MCF 10A (cell line): ENCODE measurements at regions of chr12 and their contacts with region 1.

Region 1: DNA sequence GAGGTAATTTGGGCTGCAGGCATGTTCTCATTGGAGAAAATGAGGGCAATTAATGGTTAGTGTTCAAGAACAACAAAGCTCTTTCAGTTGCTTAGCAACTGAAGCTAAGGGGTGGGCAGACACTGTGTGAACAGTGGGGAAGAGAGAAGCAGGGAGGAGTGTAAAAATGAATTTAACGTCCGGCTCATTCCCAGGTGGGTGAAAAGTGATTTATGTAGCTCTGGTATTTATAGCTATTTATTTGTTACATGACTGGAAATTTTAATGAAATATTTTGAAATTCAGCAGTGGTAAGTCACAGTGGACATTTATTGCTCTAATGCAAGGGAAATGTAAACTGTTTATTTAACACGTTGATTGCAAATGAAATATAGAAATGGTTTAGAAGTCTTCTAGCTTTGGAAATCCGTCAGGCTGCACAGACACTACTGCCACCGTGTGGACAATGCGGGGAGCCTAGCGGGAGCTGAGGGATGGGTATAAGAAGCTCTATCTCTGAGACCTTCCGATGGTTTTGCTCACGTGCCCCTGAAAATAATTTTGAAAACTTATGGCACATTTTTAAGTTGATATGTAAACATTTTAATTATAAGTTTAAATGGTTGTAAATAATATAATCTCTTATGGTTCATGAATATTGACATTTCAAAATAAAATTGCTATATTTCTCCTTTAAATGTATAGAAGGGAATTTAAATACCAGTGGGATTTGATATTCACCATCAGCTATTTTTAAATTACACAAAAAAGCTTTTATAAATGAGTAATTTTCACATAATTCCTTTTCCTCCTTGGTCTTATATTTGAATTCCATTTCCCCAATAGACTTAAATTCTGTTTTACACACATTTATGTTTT is 54.4 kb downstream of the E2F7 start:
- DNase-seq: peak; percentile 79
- H3K4me3 Mint-ChIP-seq: no peak overlapping the region
- H3K27ac Mint-ChIP-seq: no peak overlapping the region
- H3K4me1 Mint-ChIP-seq: peaks cover 4% of the 10 kb centered on the region
- H3K27me3 Mint-ChIP-seq: no peaks in the 10 kb centered on the region
- CTCF ChIP-seq: peak; percentile 86

Region 2: GRCh38 chr12:76621582-76622024 is 389.3 kb before region 1 on chr12:
- CTCF ChIA-PET with region 1: interaction called, 18 read pairs
- POLR2A ChIA-PET with region 1: no interaction called
- intact Hi-C with region 1: loop called (anchors 1 kb)
- DNase-seq: peak; percentile 83
- H3K4me3 Mint-ChIP-seq: no peak overlapping the region
- H3K27ac Mint-ChIP-seq: no peak overlapping the region
- H3K4me1 Mint-ChIP-seq: peaks cover 5% of the 10 kb centered on the region
- H3K27me3 Mint-ChIP-seq: no peaks in the 10 kb centered on the region
- CTCF ChIP-seq: peak; percentile 91

Region 3: DNA sequence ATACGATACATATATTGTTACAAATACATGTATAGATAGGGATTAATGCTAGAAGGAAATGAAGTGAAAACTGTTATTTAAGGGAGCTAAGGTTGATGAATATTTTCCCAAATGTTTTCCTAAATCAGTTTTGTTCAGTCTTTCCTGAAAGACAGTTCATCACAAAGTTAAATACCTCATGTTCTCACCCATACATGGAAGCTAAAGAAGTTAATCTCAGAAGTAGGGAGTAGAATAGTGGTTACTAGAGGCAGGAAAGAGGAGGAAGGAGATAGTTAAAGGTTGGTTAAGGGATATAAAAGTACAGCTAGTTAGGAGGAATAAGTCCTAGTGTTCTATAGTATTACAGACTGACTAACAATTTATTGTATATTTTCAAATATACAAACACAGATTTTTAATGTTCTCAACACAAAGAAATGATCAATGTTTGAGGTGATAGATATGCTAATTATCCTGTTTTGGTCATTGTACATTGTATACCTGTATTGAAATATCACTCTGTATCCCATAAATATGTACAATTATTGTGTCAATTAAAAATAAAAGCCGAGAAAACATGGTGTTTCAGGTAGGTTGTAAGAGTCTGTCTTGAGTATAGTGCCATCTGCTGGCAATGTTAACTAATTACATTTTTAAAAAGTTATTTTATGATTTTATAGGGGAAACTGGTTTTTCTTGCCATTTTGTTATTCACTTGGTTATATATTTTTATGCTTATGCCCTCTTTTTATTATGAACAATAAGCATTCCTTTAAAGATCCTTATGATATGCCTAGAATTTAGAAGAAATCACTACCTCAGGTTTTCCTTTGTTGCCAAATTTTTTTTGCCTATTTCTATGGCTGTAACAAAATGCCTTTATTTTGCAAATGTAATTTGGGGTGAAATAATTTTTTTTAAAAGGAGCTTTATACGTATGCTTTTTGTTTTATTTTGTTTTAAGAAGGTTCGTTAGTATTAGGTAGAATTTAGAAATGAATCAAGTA is 220.1 kb before region 1 on chr12:
- CTCF ChIA-PET with region 1: interaction called, 42 read pairs
- POLR2A ChIA-PET with region 1: no interaction called
- intact Hi-C with region 1: no loop called
- DNase-seq: peak; percentile 24
- H3K4me3 Mint-ChIP-seq: no peak overlapping the region
- H3K27ac Mint-ChIP-seq: peak overlapping the region; percentile 39
- H3K4me1 Mint-ChIP-seq: no peaks in the 10 kb centered on the region
- H3K27me3 Mint-ChIP-seq: no peaks in the 10 kb centered on the region
- CTCF ChIP-seq: peak; percentile 48

Region 4: DNA sequence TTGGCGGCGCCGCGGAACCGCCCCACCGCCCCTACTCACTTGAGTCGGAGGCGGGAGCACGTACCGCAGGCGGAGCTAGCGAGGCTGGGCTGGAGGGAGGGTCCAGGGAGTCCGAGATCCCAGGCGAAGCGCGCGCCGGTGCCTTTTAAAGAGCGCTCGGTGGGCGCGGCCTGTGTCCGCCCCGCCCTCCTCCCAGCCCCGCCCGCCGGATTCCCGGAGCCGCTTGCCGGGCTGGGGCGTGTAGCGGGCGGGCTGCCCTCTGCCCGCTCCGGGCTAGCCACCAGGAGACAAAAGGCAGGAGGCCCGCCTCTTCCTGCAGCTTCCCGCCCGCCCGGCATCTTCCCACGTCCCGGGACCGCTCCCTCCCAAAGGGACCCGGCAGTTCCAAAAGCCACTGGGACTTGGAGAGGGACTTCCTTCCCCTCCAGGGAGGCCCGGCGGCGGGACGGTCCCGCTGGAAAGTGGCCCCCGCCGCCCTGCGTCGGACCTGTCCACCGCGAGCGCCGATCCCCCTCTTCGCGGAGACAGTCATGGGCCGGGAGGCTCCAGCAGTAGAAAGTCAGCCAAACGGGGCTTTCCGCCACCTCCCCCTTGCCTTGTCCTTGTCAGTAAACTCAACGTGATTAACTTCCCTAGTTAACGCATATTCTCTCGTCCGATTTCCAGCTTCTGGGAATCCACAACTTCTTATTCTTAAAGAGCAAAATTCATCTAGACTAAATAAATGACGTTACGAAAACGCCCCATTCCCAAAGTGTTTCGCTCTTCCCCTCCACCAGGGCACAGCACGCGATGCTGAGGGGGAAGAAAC is 131.8 kb before region 1 on chr12 and contains the start of gene CSRP2:
- CTCF ChIA-PET with region 1: interaction called, 12 read pairs
- POLR2A ChIA-PET with region 1: interaction called, 3 read pairs
- intact Hi-C with region 1: loop called (anchors 2 kb)
- DNase-seq: peak; percentile 91
- H3K4me3 Mint-ChIP-seq: peak within 1 kb of the TSS; percentile 98
- H3K27ac Mint-ChIP-seq: peak within 1 kb of the TSS; percentile 49
- H3K4me1 Mint-ChIP-seq: peaks cover 15% of the 10 kb centered on the region
- H3K27me3 Mint-ChIP-seq: no peaks in the 10 kb centered on the region
- CTCF ChIP-seq: no peak
- total RNA-seq, gene CSRP2: 2.0 and 2.6 TPM in 2 replicates

Region 5: GRCh38 chr12:76952995-76953394 is 57.9 kb before region 1 on chr12:
- CTCF ChIA-PET with region 1: interaction called, 200 read pairs
- POLR2A ChIA-PET with region 1: interaction called, 4 read pairs
- intact Hi-C with region 1: loop called (anchors 1 kb)
- DNase-seq: peak; percentile 30
- H3K4me3 Mint-ChIP-seq: no peak overlapping the region
- H3K27ac Mint-ChIP-seq: no peak overlapping the region
- H3K4me1 Mint-ChIP-seq: no peaks in the 10 kb centered on the region
- H3K27me3 Mint-ChIP-seq: no peaks in the 10 kb centered on the region
- CTCF ChIP-seq: peak; percentile 16

Region 6: DNA sequence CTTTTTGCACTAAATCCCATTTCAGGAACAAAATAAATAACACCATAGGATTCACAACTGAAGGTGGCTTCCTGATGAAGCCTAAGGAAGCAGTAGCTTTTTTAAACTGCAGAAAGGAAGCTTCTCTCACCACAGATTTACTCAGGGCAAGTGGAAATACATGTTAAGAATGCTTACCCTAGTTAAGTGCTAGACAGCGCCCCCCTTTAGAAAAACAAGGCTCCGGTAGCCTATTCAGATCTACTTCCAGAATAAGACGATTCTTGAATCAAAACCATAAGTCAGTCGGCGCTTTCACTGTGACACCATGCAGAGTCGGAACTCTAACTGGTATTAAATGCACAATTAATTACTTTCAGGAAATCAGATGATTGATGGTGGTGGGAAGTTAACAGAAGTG is 12.6 kb after region 1 on chr12:
- CTCF ChIA-PET with region 1: interaction called, 43 read pairs
- POLR2A ChIA-PET with region 1: no interaction called
- intact Hi-C with region 1: no loop called
- DNase-seq: no peak
- H3K4me3 Mint-ChIP-seq: no peak overlapping the region
- H3K27ac Mint-ChIP-seq: peak overlapping the region; percentile 65
- H3K4me1 Mint-ChIP-seq: no peaks in the 10 kb centered on the region
- H3K27me3 Mint-ChIP-seq: no peaks in the 10 kb centered on the region
- CTCF ChIP-seq: no peak

Region 7: DNA sequence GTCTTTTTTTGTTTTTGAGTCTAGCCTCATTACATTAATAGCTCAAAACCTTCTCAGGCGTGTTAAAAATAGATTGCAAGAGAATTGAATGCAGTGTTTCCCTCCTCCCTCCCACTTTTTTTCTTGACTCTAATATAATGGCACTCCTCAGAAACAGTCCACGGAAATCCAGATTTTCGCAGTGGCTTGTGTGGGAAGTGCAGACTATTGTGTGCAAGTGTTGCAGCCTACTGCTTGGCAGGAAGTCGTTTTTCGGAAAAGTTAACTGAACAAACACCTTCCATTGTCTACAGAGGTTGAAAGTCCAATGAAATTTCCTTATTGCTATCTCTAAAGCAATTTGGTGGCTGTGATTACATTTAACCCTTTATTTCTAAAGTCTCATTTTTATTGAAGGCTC is 202.4 kb after region 1 on chr12:
- CTCF ChIA-PET with region 1: no interaction called
- POLR2A ChIA-PET with region 1: no interaction called
- intact Hi-C with region 1: no loop called
- DNase-seq: no peak
- H3K4me3 Mint-ChIP-seq: no peak overlapping the region
- H3K27ac Mint-ChIP-seq: no peak overlapping the region
- H3K4me1 Mint-ChIP-seq: no peaks in the 10 kb centered on the region
- H3K27me3 Mint-ChIP-seq: no peaks in the 10 kb centered on the region
- CTCF ChIP-seq: no peak